HEK293T (cell line): ENCODE measurements at regions of chr14 and their contacts with region 1.

Region 1: DNA sequence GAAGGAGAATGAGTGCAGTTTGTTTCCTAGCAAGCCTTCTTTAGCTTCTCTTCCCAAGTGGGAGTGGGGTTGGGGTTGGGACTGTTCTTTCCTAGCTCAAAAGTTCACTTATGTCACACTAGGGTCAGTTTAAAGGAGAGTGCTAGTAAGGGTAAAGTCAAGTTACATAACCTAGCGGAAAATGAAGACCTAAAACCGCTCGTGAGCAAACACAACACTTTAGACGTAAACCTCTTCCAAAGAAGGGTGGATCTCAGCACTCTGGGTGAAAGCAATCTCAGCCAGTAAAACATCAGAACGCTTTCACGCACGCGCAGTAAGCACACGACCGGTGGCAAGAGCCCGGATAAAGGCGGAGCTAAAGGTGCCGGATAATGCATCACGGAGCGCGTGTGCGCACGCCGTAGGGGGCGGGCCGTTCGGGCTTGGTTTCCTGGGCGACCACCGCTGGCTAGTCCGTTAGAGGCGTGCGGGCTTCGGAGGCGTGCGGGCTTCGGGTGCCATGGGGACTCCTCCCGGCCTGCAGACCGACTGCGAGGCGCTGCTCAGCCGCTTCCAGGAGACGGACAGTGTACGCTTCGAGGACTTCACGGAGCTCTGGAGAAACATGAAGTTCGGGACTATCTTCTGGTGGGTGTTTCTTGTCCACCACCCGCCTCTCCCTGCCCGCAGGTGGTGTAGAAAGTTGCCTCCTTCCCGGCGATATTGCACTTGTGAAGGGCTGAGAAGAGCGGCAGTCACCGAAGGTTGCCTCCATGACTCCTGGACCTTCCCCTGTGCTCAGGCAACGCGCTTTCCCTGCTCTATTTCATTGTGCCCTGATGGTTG is at the start of gene SNAPC1:
- DNase-seq: peak; percentile 96

Region 2: GRCh38 chr14:61694830-61695694 is 67.1 kb before region 1 on chr14 and contains the start of gene HIF1A:
- CTCF ChIA-PET with region 1: no interaction called
- POLR2A ChIA-PET with region 1: interaction called, 15 read pairs
- DNase-seq: peak; percentile 95

Region 3: GRCh38 chr14:61719344-61720293 is 42.6 kb before region 1 on chr14:
- CTCF ChIA-PET with region 1: no interaction called
- POLR2A ChIA-PET with region 1: interaction called, 10 read pairs
- DNase-seq: no peak

Region 4: DNA sequence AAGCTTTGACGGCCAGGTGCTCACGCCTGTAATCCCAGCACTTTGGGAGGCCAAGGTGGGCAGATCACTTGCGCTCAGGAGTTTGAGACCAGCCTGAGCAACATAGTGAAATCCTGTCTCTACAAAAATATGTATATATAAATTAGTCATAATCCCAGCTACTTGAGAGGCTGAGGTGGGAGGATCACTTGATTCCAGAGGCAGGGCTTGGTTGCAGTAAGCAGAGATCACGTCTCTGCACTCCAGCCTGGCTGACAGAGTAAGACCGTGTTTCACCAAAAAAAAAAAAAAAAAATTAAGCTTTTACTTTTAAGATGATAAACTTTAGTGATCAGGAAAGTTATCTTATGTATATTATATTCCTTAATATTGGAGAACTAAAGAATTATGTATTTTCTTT is 17.9 kb before region 1 on chr14:
- CTCF ChIA-PET with region 1: no interaction called
- POLR2A ChIA-PET with region 1: interaction called, 36 read pairs
- DNase-seq: no peak

Region 5: DNA sequence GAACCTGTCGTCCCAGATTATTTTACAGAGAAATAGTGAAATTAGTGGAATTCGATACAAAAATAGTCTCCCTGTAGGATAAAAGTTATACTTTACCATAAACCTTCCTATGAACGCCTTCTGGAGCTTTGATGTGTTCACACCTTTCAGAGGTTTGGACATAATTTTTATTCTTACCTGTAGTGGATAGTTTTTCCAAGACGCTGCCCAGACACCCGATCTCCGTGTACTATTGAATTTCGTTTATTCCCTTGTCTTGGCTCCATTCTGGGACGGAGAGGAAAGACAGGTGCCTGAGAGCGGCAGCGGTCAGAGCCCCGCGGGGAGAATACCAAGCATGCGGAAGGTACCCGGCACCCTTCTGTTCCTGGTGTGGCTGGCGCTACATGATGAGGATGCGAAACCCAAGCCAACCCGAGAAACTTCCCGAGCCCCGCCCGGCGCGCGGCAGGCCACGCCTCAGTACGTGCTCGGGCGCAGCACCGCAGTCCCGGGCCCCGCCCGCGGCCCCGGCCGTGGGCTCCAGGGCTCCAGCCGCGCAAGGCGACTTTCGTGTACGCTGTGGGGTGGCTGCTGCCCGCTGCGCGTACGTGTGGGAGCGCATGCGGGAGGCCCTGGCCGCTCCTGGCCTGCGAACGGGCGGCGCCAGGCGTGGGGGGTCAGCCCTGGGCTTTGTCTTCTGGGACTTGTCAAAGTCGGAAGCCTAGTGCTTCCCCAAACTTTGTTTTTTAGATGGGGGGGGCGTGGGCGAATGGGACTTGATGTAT is 11.3 kb before region 1 on chr14:
- CTCF ChIA-PET with region 1: interaction called, 4 read pairs
- POLR2A ChIA-PET with region 1: interaction called, 44 read pairs
- DNase-seq: peak; percentile 76